A673 (cell line): ENCODE measurements at regions of chr7 and their contacts with region 1.

Region 1: DNA sequence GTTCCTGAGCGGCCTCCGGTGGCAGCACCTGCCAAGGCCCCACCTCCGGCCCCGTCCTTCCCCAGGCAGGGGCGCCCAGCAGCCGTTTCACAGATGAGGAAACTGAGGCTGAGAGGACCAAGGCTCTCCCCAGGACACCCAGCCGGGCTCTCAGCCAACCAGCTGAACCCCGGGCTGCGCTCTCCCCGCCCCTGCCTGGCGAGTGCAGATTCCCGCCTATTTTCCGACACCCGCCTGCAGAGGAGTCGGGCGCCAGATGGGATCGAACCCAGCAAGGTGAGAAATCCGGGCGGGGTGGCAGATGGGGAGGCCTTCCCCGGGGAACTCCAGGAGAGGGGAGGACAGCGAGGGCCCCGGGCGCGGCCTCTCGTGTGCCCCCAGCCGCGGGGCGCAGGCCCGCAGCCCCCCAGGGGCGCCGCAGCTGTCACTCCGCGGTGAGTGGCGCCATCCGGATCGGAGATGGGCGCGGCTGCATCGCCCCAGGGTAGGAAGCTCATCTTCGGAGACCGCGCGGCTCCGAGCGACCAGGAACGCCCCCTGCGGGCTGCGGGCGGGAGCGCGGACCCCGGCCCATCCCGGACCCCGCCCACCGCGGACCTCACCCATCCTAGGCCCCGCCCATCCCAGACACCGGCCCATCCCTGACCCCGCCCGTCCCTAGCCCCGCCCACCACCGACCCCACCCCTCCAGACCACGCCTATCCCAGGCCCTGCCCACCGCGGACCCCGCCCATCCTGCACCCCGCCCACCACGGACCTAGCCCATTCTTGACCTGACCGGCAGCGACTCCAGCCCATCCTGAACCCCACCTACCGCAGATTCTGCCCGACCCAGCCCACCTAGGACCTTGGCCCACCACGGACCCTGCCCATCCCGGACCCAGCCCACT is 90.3 kb downstream of the MICALL2 start:
- DNase-seq: peak; percentile 91
- H3K4me3 ChIP-seq: peak overlapping the region; percentile 41
- H3K27ac ChIP-seq: peak overlapping the region; percentile 44
- H3K4me1 ChIP-seq: peaks cover 27% of the 10 kb centered on the region
- H3K27me3 ChIP-seq: no peaks in the 10 kb centered on the region
- CTCF ChIP-seq: peak; percentile 67

Region 2: DNA sequence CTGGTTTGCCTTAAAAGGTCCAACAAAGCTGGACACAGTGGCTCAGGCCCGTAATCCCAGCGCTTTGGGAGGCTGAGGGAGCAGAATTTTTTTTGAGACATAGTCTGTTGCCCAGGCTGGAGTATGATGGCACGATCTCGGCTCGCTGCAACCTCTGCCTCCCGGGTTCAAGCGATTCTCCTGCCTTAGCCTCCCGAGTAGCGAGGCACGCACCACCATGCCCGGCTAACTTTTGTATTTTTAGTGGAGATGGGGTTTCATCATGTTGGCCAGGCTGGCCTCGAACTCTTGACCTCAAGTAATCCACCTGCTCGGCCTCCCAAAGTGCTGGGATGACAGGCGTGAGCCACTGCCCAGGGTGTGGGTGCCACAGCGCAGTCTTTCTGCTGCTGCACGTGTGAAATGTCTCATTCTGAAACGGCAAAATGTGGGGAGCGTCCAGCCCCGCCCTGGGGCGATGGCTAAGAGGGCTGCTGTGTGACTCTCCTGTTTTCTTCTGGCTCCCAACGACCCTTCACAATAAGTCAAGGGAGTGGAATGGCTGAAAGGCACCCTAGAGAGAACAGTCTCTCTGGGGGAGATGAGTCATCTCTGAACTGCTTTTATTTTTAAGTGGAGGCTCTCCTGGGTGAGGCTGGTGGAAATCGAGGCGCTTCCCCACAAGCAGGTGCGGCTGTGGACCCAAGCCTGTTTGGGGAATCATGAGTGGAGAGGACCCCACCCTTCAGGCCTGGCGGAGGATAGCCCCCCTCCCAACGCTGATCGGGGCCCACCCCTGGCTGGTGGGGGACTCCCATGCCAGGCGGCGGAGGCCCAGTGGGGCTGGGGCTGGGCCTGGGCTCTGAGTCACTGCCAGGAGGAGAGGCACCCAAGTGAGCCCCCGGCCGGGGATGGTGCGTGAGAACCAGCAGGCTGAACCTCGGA is 432.5 kb before region 1 on chr7:
- CTCF ChIA-PET with region 1: no interaction called
- POLR2A ChIA-PET with region 1: no interaction called
- intact Hi-C with region 1: no loop called
- DNase-seq: peak; percentile 73
- H3K4me3 ChIP-seq: no peak overlapping the region
- H3K27ac ChIP-seq: peak overlapping the region; percentile 47
- H3K4me1 ChIP-seq: no peaks in the 10 kb centered on the region
- H3K27me3 ChIP-seq: peaks cover 4% of the 10 kb centered on the region
- CTCF ChIP-seq: no peak

Region 3: DNA sequence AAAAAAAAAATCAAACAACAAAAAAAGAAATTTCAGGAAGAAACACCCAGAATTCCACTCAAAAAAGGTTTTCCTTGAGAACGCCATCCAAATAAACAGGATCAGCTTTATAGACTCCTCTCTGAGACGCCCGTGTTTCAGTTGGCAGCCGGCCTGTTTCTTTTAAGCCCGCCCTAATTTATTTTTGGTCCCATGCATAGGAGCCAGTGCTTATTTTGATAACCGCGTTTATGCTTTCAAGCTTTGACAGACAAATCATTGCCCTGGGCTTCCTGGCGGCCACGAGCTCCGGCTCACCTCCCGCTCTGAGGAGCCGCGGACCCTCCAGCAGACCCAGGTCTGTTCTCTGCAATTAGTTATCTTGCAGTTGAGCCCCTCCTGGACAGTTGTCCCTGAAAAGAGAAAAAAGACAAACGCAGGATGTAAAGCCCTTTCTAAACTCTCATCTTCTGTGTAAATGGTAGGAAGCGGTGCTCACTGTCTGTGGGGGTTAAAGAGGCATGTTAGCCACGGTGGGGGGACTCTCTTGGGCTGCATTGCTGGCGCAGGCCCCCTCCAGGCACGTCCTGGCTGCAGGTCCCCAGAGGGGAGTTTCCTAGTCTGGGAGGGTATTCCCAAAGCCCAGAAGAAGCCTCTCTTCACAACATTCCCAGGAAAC is 158.5 kb before region 1 on chr7:
- CTCF ChIA-PET with region 1: interaction called, 15 read pairs
- POLR2A ChIA-PET with region 1: no interaction called
- intact Hi-C with region 1: no loop called
- DNase-seq: peak; percentile 68
- H3K4me3 ChIP-seq: no peak overlapping the region
- H3K27ac ChIP-seq: no peak overlapping the region
- H3K4me1 ChIP-seq: peaks cover 9% of the 10 kb centered on the region
- H3K27me3 ChIP-seq: no peaks in the 10 kb centered on the region
- CTCF ChIP-seq: no peak